Pancreas (tissue), 10 donors: ENCODE measurements at regions of chr14 and their contacts with region 1.

Region 1: DNA sequence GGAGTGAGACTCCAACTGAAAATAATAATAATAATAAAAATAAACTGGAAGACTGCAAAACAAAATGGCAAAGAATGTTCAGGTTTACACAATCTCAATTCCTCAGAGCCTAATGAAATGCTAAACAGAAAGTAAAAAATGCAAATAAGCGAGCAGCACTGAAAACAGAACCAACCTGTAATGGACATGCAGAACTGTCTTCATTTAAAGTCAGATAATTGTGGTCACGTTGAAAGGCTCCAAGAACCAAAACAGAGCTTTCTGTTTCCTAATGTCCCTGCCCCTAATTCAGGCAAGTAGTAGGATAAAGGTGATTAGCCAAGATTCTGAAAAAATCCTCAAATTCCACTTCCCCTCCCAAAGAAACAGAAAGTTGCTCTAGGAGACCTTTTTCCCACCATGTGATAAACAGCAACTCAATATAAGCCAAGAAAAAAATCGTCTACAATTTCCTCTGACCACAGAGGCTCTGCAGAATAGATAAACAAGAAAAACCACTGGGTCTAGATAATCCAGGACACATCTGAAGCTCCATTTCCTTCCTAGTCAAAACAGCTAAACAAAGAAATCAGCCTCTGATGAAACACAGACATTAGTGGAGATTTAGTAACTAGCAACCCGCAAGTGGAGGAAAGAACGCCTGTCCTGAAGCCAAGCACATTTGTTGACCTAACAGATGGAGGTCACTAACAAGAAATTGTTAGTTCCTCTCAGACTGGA is 3.0 kb downstream of the MIS18BP1 start:
- DNase-seq: peak in 1 of 6 donors; percentile 23
- ATAC-seq: no peak
- H3K4me3 ChIP-seq: no peak overlapping the region
- H3K27ac ChIP-seq: peak overlapping the region in 2 of 4 donors; percentile 10 to 48
- H3K4me1 ChIP-seq: peaks cover 0 to 6% (median 4%) of the 10 kb centered on the region in 3 donors
- H3K27me3 ChIP-seq: no peaks in the 10 kb centered on the region
- CTCF ChIP-seq: no peak

Region 2: GRCh38 chr14:44756554-44756953 is 493.5 kb before region 1 on chr14:
- intact Hi-C with region 1: no loop called
- DNase-seq: no peak
- ATAC-seq: peak in 2 of 4 donors; percentile 51
- H3K4me3 ChIP-seq: no peak overlapping the region
- H3K27ac ChIP-seq: no peak overlapping the region
- H3K4me1 ChIP-seq: no peaks in the 10 kb centered on the region
- H3K27me3 ChIP-seq: no peaks in the 10 kb centered on the region
- CTCF ChIP-seq: no peak

Region 3: DNA sequence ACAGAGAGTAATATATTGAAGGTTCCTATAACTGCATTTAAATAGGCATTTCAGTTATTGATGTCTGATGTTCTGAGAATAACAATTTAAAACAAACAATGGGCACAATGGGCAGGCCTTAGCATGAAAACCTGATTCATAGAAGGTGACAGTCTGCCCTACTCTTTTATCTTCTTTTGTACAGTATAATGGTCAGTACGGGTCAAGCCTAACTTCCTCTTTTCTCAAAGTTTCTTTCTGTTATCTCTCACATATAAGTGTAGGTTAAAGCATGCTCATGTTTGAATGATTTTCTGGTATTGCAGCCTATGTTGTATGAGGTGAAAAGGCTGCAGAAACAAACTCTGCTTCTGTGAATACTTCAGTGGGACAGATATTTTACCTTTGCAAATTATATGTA is 129.9 kb before region 1 on chr14:
- intact Hi-C with region 1: loop called in 1 of 3 experiments (anchors 10 kb)
- DNase-seq: no peak
- ATAC-seq: no peak
- H3K4me3 ChIP-seq: no peak overlapping the region
- H3K27ac ChIP-seq: no peak overlapping the region
- H3K4me1 ChIP-seq: no peaks in the 10 kb centered on the region
- H3K27me3 ChIP-seq: no peaks in the 10 kb centered on the region
- CTCF ChIP-seq: no peak